CD4-positive, alpha-beta T cell (primary cell): ENCODE measurements at regions of chrX and their contacts with region 1.

Region 1: DNA sequence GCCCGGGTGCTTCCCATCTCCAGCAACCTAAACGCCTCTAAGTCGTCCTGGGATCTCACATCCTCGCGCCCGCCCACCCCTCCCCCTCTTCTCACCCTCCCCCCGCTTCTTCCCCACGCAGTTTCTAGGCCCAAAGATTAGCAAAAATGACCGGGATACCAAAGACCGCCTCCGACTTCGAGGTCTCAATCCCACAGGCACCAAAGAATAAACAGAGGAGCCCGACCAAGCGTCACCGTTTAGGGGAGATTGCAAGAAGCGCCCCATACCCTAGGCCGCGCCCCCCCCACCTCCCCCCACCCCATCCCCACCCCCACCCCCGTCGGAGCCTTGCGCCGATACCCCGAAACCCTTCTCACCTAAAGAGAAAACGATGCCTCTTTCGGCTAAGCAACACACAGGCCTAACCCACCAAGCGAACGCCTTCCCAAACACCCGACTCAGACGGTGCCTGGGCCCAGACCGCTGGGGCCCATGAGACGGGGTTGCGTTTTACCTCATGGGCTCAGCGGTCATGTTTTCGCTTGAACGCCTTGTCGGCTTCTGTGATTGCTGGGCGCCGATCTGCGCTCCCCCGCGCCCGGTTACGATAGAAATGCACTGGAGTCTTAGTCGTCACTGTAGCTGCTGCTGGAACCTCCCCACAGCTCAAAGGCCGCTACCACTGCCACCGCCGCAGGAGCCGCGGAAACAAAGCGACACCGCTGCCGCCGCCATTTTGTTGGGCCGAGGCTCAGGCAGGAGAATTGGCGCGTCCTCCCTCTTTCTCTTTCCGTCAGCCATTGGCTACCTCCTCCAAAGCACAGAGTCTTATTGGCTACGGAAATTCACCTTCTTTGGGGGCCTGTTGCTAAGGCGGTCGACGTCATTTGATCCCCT is at the start of gene ATRX:
- DNase-seq: peak; percentile 53 to 91 (median 70)
- ATAC-seq: peak; percentile 88
- H3K4me3 ChIP-seq: peak within 1 kb of the TSS; percentile 92
- H3K4me3 Mint-ChIP-seq: peak within 1 kb of the TSS; percentile 99
- H3K27ac ChIP-seq: peak within 1 kb of the TSS; percentile 77 to 91
- H3K27ac Mint-ChIP-seq: peak within 1 kb of the TSS; percentile 97
- H3K4me1 ChIP-seq: peaks cover 25% of the 10 kb centered on the region
- H3K4me1 Mint-ChIP-seq: peaks cover 54% of the 10 kb centered on the region
- H3K27me3 ChIP-seq: no peaks in the 10 kb centered on the region
- H3K27me3 Mint-ChIP-seq: no peaks in the 10 kb centered on the region
- CTCF ChIP-seq: no peak
- total RNA-seq, gene ATRX: 72.7 to 79.5 TPM

Region 2: GRCh38 chrX:77450996-77451395 is 334.7 kb before region 1 on chrX:
- CTCF ChIA-PET with region 1: no interaction called
- POLR2A ChIA-PET with region 1: no interaction called
- intact Hi-C with region 1: no loop called
- DNase-seq: no peak
- ATAC-seq: no peak
- H3K4me3 ChIP-seq: no peak overlapping the region
- H3K4me3 Mint-ChIP-seq: no peak overlapping the region
- H3K27ac ChIP-seq: no peak overlapping the region
- H3K27ac Mint-ChIP-seq: no peak overlapping the region
- H3K4me1 ChIP-seq: peaks cover 13% of the 10 kb centered on the region
- H3K4me1 Mint-ChIP-seq: peaks cover 6% of the 10 kb centered on the region
- H3K27me3 ChIP-seq: peaks cover 6 to 9% of the 10 kb centered on the region in 2 experiments
- H3K27me3 Mint-ChIP-seq: peaks cover 20% of the 10 kb centered on the region
- CTCF ChIP-seq: no peak

Region 3: GRCh38 chrX:77675986-77676385 is 109.7 kb before region 1 on chrX:
- CTCF ChIA-PET with region 1: no interaction called
- POLR2A ChIA-PET with region 1: no interaction called
- intact Hi-C with region 1: loop called in 1 of 2 experiments (anchors 10 kb)
- DNase-seq: no peak
- ATAC-seq: no peak
- H3K4me3 ChIP-seq: no peak overlapping the region
- H3K4me3 Mint-ChIP-seq: no peak overlapping the region
- H3K27ac ChIP-seq: no peak overlapping the region
- H3K27ac Mint-ChIP-seq: no peak overlapping the region
- H3K4me1 ChIP-seq: no peaks in the 10 kb centered on the region
- H3K4me1 Mint-ChIP-seq: peaks cover 4% of the 10 kb centered on the region
- H3K27me3 ChIP-seq: no peaks in the 10 kb centered on the region
- H3K27me3 Mint-ChIP-seq: no peaks in the 10 kb centered on the region
- CTCF ChIP-seq: no peak

Region 4: DNA sequence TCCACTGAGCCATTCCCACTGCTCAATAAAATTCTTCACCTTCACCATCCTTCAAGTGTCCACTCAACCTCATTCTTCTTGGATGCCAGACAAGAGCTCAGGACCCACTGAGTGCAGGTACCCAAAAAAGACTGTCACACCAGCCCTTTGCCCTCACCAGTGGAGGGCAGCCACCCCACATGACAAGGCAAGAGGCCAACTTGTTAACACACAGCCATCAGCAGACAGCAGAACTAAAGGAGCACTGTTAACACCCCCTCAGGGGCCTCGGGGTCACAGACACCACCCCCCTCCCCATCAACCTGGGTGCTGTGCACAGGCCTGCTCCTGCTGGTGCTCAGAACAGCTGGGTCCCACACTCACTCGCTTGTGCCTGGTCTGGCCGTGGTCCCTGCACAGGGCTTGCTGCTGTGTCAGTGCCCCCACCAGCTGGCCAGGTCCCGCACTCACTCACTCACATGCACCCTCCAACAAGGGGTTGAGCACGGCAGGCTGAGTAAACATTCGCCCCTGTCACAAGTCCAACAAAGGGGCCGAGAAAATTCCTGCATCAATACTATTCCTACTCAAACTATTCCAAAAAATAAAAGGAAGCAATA is 53.8 kb before region 1 on chrX:
- CTCF ChIA-PET with region 1: no interaction called
- POLR2A ChIA-PET with region 1: no interaction called
- intact Hi-C with region 1: loop called in 1 of 2 experiments (anchors 10 kb)
- DNase-seq: peak in 2 of 14 experiments; percentile 4 to 17
- ATAC-seq: no peak
- H3K4me3 ChIP-seq: no peak overlapping the region
- H3K4me3 Mint-ChIP-seq: peak overlapping the region; percentile 51
- H3K27ac ChIP-seq: no peak overlapping the region
- H3K27ac Mint-ChIP-seq: peak overlapping the region; percentile 37
- H3K4me1 ChIP-seq: peaks cover 10% of the 10 kb centered on the region
- H3K4me1 Mint-ChIP-seq: peaks cover 43% of the 10 kb centered on the region
- H3K27me3 ChIP-seq: no peaks in the 10 kb centered on the region
- H3K27me3 Mint-ChIP-seq: no peaks in the 10 kb centered on the region
- CTCF ChIP-seq: no peak